Right ventricle myocardium superior (tissue), 1 donor: ENCODE measurements at regions of chr11 and their contacts with region 1.

Region 1: DNA sequence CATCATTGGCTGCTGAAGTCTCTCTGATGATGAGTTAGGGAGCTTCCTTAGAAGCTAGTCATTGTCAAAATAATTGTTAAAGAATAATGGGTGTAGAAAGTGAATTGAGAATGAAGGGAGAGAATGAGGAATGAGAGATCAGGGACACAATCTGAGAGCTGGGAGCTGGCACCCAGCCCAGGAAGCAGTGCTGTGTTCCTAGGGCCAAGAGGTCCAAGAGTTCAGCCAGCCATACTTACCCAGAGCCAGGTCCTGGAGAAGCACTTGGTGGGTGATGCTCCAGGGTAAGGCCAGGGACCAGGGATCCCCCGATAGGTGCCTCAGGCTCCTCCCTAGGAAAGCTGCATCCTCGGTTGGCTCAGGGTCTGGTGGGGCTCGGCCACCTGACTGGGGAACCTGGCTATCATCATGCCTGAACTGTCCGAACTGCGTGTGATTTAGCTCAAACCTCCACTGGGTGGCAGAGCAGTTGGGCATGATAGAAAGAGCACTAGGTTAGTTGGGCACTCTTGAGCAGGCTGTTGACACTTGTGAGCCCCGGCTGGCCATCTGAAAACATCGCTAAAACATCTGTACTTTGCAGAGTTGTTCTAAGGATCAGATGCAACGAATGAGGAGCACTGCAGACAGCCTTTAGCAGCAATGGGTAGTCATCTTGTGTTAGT is 123.9 kb upstream of the NCAM1 start:
- DNase-seq: no peak
- ATAC-seq: peak; percentile 60

Region 2: GRCh38 chr11:112961146-112961668 is 123.9 kb after region 1 on chr11 and contains the start of gene NCAM1:
- intact Hi-C with region 1: loop called (anchors 10 kb)
- DNase-seq: peak; percentile 90
- ATAC-seq: peak; percentile 73
- total RNA-seq, gene NCAM1: 226 TPM